ENCODE measurements at regions of chr10 and their contacts with region 1.

Region 1: GRCh38 chr10:21495752-21496342 is 29.6 kb downstream of the SKIDA1 start:
- DNase-seq: peak; percentile 97
- H3K4me3 Mint-ChIP-seq: peak overlapping the region; percentile 89
- H3K27ac Mint-ChIP-seq: peak overlapping the region; percentile 45
- H3K4me1 Mint-ChIP-seq: peaks cover 17% of the 10 kb centered on the region
- H3K27me3 Mint-ChIP-seq: peaks cover 74% of the 10 kb centered on the region

Region 2: GRCh38 chr10:21406595-21407193 is 89.2 kb before region 1 on chr10:
- intact Hi-C with region 1: no loop called
- DNase-seq: peak; percentile 60
- H3K4me3 Mint-ChIP-seq: no peak overlapping the region
- H3K27ac Mint-ChIP-seq: peak overlapping the region; percentile 22
- H3K4me1 Mint-ChIP-seq: peaks cover 9% of the 10 kb centered on the region
- H3K27me3 Mint-ChIP-seq: no peaks in the 10 kb centered on the region

Region 3: DNA sequence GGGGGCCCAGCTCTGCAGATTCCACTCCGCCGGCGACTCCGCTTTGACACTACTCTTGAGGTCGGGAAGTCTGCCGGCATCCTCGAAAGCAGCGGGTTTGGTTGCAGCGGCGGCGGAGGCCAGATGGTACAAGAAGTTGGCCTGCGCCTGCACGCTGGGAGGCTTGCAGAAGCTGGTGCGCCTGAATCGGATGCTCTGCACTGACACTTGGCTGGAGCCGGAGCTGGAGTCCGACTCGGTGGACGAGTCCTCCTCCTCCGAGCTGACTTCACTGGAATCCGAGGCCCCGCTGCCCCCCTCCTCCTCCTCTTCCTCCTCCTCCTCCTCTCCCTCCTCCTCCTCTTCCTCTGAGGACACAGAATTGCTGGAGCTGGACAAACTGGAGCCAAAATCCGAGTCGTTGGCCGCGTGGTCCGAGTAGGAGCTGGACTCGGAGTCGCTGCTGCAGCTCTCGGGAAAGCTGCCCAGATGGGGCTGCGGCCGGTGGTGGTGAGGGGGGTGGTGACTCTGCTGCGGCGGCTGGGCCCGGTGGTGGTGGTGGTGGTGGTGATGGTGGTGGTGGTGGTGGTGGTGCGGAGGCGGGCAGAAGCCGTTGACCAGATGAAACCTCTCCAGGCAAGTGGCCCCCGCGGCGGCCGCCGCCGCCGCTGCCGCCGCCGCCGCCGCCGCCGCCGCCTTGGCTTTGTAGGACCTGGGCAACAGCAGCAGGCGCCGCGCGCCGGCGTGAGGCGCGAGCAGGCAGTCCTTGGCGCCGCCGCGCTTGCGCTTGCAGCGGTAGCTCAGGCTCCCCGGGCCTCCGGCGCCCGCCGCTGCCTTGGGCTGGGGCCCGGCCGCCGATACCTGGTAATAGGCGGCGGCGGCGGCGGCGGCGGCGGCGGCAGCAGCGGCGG is 20.6 kb after region 1 on chr10:
- intact Hi-C with region 1: loop called (anchors 1 kb)
- DNase-seq: peak; percentile 86
- H3K4me3 Mint-ChIP-seq: peak overlapping the region; percentile 87
- H3K27ac Mint-ChIP-seq: no peak overlapping the region
- H3K4me1 Mint-ChIP-seq: peaks cover 40% of the 10 kb centered on the region
- H3K27me3 Mint-ChIP-seq: peaks cover 78% of the 10 kb centered on the region

Region 4: DNA sequence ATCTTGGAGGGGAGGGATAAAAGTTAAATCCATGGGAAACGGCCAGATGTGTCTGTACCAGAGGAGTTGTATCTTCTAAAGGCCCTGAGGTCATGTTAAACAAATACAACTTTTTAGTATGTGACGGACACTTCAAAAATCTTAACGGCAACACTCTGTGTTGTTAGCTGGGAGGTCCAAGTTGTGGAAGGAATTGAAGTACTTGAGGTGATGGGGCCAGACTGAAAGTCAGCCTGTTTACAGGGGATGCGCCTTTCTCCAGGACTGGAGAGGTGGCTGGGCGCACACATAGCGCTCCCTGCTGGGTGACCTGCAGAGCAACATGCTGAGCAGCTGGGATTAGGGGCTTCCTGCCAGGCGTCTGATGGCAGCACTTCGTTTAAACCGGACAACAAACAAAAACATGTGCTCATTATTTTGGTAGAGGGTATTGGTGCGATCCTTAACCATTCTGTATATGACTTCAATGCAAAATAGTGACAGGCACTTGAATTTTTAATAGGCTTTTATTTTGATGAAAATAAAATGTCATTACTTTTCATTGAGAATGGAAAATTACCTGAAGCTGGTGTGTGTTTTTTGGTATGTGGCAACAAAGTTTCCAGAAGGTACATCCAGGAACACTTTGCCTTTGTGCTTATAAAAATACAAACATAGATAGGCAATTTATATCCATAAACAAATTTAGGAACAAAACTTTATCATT is 236.4 kb after region 1 on chr10:
- intact Hi-C with region 1: loop called (anchors 1 kb)
- DNase-seq: peak; percentile 84
- H3K4me3 Mint-ChIP-seq: no peak overlapping the region
- H3K27ac Mint-ChIP-seq: no peak overlapping the region
- H3K4me1 Mint-ChIP-seq: peaks cover 23% of the 10 kb centered on the region
- H3K27me3 Mint-ChIP-seq: no peaks in the 10 kb centered on the region

Region 5: DNA sequence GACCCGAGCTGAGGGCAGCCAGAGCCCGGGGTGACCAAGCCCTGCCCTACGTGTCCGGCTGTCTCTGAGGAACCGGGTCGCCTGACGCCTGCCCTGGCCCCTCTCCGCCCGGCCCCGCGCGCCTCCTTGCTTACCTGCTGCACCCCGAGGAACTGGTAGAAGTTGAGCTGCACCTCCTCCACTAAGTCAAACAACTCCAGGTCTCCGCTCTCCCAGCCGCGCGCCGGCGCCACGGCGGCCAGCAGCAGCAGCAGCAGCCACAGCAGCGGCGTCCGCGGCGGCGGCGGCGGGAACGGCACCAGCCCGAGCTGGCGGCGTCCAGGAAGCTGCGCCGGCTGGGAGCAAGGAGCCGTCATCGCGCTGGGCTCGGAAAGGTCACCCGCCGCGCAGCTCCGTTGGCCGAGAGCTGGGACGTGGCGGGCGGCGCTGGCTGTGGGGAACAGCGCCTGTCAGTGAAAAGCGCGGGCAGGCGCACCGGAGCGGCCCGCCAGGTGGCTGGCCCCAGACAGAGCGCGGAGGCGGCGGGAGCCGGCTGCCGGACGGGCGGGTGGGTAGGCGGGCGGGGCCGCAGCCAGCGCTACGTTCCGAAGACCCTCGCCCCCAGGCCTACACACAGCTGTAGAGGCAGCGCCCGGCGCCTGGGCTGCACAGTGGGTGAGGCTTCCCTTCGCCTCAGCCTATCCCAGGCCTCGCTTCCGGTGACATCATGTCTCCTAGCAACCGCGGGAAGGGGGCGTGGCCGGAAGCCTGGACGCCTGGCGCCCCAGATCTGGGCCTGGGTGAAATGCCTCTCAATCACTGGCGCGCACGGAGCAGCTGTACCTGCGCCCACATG is 507.4 kb after region 1 on chr10 and contains the start of gene DNAJC1:
- intact Hi-C with region 1: loop called (anchors 5 kb)
- DNase-seq: peak; percentile 100
- H3K4me3 Mint-ChIP-seq: peak within 1 kb of the TSS; percentile 93
- H3K27ac Mint-ChIP-seq: peak within 1 kb of the TSS; percentile 96
- H3K4me1 Mint-ChIP-seq: peaks cover 26% of the 10 kb centered on the region
- H3K27me3 Mint-ChIP-seq: peaks cover 18% of the 10 kb centered on the region
- total RNA-seq, gene DNAJC1: 22.1 and 22.4 TPM in 2 replicates

Region 6: DNA sequence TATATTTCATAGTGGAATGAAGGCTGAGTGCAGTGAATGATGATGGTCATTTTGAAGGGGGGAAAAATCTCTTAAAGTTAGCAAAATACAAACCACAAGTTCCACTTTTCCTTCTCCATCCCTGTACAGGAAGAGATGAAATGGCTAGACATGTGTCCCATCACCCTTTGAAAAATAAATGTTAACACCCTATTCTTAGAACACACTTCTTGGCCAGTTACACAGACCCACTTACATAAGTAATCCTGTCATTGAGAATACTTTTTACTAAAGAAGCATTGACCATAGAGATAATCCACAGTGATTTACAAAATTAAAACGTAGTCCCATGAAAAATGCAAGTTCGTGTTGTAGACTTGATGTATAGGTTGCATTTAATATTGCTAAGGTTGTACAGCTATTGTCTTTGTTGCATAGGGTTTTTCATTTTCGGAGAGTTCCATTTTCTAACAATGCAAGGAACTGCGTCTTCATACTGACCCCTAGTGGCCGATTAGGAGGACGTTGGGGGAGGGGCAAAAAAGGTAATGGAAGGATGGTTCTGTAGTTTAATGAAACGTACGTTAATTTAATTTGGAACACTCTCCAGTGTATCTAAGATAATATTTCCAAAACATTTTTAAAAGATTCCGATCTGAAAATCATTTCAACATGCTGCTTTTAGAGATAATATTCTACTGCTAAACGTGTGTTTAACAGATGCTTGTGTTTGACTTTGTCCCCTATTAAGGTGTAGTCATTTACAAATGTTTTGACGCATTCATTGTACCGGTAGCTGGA is 1492.9 kb after region 1 on chr10:
- intact Hi-C with region 1: loop called (anchors 5 kb)
- DNase-seq: peak; percentile 92
- H3K4me3 Mint-ChIP-seq: no peak overlapping the region
- H3K27ac Mint-ChIP-seq: no peak overlapping the region
- H3K4me1 Mint-ChIP-seq: peaks cover 8% of the 10 kb centered on the region
- H3K27me3 Mint-ChIP-seq: peaks cover 20% of the 10 kb centered on the region